GM12878 (cell line): ENCODE measurements at regions of chr2 and their contacts with region 1.

Region 1: DNA sequence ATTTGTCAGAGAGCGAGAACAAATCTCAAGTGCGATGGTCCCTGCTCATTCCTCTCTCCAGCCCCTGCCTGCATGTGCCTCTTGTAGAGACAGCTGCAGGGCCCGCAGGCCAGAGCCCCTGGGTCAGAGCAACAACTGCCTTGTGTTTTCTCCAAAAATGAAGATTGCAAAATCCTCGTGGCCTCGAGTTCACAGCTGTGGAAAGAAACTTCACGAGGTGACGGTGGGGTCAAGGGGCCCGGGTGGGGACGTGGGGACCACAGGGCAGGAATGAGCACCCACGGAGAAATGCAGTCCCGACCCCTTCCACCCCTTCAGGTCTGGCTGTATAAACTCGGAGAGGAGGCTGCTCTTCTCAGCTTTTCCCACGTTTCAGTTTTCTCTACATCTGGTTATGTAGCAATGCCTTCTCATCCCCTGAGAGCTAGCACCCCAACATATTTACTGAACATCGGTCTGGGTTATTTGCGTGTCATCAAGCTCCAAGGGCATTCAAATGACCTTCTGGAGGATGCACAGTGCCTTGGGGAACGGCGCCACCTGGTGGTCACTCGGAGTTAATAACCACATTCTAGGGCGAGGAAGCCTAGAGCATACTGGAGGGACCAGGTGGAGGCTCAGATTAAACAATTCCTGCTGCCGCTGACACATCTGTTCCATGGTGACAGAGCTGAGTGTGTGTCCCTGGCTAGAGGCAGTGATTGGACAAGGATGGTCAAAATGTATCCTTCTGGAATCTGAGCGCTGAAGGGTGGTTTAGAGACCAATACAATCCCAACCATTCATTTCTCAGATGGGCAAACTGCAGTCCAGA is 91.4 kb upstream of the CYRIA start:
- DNase-seq: peak; percentile 26
- ATAC-seq: peak; percentile 99
- H3K4me3 ChIP-seq: no peak overlapping the region
- H3K27ac ChIP-seq: no peak overlapping the region
- H3K4me1 ChIP-seq: no peaks in the 10 kb centered on the region
- H3K27me3 ChIP-seq: peaks cover 6% of the 10 kb centered on the region in 2 experiments; a peak in 3 of 4 replicates
- CTCF ChIP-seq: peak; percentile 76 to 95 (median 76)
- EP300 ChIP-seq: no peak
- POLR2A ChIP-seq: no peak
- RAD21 ChIP-seq: peak; percentile 99

Region 2: DNA sequence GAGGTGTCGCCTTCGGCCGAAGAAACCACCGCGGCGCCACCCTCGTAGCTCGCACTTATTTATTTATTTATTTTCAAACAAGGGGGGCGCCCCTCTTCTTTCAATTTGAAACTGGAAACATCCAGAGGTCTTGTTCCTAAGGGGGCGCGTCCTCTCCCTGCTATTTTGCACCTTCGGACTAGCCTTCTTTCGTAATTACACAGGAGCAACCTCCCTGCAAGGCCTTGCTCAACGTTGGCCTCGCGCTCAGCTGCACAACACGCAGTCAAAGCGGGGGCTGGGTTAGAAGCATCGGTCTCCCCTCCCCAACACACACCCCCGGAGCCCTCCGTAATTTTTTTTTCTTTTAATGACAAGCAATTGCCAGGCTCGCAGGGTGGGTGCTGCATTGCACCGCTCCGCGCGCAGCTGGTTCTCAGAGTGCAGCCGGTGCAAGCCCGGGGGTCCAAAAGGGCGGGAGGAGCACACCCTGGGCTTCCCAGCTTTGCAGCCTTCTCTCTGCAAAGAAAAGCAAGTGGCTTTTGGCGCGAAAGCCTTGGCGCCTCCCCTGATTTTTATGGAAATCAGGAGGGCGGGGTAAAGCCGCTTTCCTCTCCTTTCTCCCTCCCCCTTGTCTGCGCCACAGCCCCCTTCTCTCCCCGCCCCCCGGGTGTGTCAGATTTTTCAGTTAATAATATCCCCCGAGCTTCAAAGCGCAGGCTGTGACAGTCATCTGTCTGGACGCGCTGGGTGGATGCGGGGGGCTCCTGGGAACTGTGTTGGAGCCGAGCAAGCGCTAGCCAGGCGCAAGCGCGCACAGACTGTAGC is 817.0 kb before region 1 on chr2 and contains the start of gene MYCN:
- CTCF ChIA-PET with region 1: no interaction called
- POLR2A ChIA-PET with region 1: no interaction called
- RAD21 ChIA-PET with region 1: no interaction called
- SMC1A ChIA-PET with region 1: no interaction called
- in situ Hi-C with region 1: loop called (anchors 25 kb)
- intact Hi-C with region 1: no loop called
- DNase-seq: no peak
- ATAC-seq: no peak
- H3K4me3 ChIP-seq: no peak within 1 kb of the TSS
- H3K27ac ChIP-seq: no peak within 1 kb of the TSS
- H3K4me1 ChIP-seq: no peaks in the 10 kb centered on the region
- H3K27me3 ChIP-seq: peaks cover 12 to 14% of the 10 kb centered on the region in 2 experiments
- CTCF ChIP-seq: peak in 1 of 3 experiments; percentile 45; a peak in 3 of 6 replicates
- EP300 ChIP-seq: no peak
- POLR2A ChIP-seq: no peak
- RAD21 ChIP-seq: peak; percentile 74
- polyA plus RNA-seq, gene MYCN: not detected

Region 3: DNA sequence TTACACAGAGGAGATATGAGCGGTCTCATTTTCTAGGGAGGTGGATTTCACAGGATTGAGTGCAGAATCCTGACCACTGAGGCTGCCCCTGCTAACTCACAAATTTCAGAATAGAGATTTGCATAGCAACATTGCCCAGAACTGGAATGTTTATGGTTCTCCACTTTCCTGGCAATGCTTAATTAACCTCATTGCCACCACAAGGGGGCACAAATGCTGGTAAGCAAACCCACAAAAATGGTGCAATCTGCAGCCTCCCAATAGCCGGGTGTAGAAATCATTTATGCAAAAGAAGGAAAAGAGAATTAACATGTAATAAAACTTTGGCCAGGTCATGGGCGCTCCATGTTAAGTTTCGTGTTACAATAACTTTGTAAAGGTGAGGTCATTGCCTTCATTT is 203.8 kb before region 1 on chr2:
- CTCF ChIA-PET with region 1: interaction called, 7 read pairs
- POLR2A ChIA-PET with region 1: interaction called, 4 read pairs
- RAD21 ChIA-PET with region 1: interaction called, 6 read pairs
- SMC1A ChIA-PET with region 1: interaction called, 12 read pairs
- in situ Hi-C with region 1: no loop called
- intact Hi-C with region 1: loop called (anchors 1 kb)
- DNase-seq: no peak
- ATAC-seq: peak; percentile 73
- H3K4me3 ChIP-seq: no peak overlapping the region
- H3K27ac ChIP-seq: no peak overlapping the region
- H3K4me1 ChIP-seq: no peaks in the 10 kb centered on the region
- H3K27me3 ChIP-seq: no peaks in the 10 kb centered on the region
- CTCF ChIP-seq: peak; percentile 53 to 62 (median 57)
- EP300 ChIP-seq: no peak
- POLR2A ChIP-seq: no peak
- RAD21 ChIP-seq: peak; percentile 48; the same call in 1 of the 2 replicates

Region 4: DNA sequence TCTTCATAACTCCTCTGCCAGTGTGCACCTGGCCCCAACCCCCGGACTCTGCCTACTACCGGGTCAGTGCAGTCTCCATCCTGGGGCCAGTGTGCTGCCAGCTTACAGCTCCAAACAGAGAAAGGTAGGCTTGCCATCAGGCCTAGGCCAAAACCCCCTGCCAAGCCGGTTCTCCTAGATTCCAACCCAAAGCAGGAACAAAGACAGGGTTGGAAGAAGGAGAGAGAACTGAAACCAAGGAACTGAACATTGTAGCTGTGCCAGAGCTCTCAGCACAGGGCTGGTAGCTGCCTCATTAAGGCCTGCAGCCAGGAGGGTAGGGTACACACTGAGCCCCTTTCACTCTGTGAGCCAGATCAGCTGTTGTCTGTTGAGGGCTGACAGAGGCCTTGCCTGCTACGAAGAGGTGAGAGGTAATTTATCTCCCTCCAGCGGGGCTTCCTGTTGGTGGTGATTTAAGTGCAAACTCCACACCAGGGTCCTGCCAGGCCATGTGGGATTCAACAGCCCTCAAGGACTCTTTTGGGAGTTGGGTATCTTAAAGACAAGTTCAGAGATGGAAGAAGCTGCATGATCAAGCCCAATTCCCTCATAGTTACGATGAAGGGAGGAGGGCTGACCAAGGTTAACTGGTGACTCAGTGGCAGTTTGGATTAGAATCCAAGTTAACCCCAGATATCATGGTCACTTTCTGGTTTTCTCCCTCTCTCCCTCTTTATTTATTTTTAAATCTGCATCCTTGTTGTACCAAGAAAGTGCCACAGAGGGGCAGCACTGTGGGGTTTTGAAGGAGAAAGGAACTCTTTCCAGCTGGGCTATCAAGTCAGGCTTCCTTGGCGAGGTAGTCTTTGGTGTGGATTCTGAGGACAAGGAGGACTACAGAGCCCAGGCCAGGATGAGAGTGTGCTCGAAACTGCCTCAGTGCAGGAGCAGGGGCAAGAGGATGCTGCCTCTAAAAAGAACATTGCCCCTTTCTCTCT is 139.5 kb before region 1 on chr2:
- CTCF ChIA-PET with region 1: interaction called, 109 read pairs
- POLR2A ChIA-PET with region 1: no interaction called
- RAD21 ChIA-PET with region 1: interaction called, 59 read pairs
- SMC1A ChIA-PET with region 1: interaction called, 65 read pairs
- in situ Hi-C with region 1: loop called (anchors 5 kb)
- intact Hi-C with region 1: loop called (anchors 1 kb)
- DNase-seq: no peak
- ATAC-seq: no peak
- H3K4me3 ChIP-seq: no peak overlapping the region
- H3K27ac ChIP-seq: no peak overlapping the region
- H3K4me1 ChIP-seq: no peaks in the 10 kb centered on the region
- H3K27me3 ChIP-seq: peaks cover 0 to 3% of the 10 kb centered on the region in 2 experiments; a peak in 2 of 4 replicates
- CTCF ChIP-seq: peak in 2 of 3 experiments; percentile 22 to 24; a peak in 3 of 6 replicates
- EP300 ChIP-seq: no peak
- POLR2A ChIP-seq: no peak
- RAD21 ChIP-seq: peak; percentile 48

Region 5: DNA sequence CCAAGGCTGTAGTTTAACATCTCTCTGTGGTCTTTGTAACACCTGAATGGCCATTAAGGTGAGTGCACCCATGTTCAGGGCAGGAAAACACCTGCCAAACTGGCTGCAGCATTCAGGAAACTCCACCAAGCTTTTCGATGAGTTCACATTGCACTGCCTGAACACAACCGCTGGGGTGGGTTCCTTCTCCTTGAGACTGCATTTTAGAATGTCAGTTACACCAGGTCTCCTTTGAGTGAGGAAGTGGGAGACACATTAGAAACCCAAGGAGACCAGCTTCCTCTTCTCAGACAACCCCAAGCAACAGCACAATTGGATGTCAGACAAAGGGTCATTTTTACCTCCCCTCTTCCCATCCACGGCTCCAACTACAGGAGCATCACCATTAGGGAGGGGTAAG is 126.6 kb before region 1 on chr2:
- CTCF ChIA-PET with region 1: interaction called, 83 read pairs
- POLR2A ChIA-PET with region 1: no interaction called
- RAD21 ChIA-PET with region 1: interaction called, 30 read pairs
- SMC1A ChIA-PET with region 1: interaction called, 33 read pairs
- in situ Hi-C with region 1: no loop called
- intact Hi-C with region 1: no loop called
- DNase-seq: no peak
- ATAC-seq: peak; percentile 69
- H3K4me3 ChIP-seq: no peak overlapping the region
- H3K27ac ChIP-seq: no peak overlapping the region
- H3K4me1 ChIP-seq: peaks cover 10% of the 10 kb centered on the region
- H3K27me3 ChIP-seq: peaks cover 0 to 16% of the 10 kb centered on the region in 2 experiments
- CTCF ChIP-seq: peak; percentile 18 to 31 (median 27); a peak in 3 of 6 replicates
- EP300 ChIP-seq: no peak
- POLR2A ChIP-seq: no peak
- RAD21 ChIP-seq: peak; percentile 60

Region 6: DNA sequence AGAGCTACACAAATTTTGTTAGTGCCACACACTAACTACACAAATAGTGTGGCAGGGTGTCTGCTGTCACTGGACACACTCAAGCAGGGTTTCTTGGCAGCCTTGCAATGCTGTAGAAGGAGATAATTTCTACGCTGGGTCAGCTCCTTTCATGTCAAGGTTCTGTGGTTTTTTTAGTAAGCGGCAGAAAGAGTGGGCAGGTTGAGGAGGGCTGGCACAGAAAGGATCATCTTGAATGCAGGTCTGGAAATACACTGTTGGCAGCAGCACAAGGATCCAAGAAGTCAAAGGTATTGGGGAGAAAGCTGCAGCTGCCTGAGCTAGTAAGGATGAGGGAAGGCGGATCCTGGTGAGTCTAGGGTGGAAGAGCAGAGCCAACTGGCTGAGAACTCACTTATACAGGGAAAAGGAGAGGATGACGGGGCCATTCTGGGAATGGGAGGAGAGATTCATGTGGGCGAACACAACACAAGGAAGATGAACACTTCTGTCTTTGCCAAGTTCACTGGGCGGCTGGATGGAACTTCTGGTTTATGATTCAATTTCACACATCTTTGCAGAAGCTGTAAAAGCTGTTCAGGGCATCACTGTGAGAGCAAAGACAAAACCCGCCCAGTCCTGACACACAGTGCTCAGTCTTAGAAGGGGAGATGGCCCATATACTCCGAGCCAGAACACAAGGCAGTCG is 74.5 kb before region 1 on chr2:
- CTCF ChIA-PET with region 1: interaction called, 5 read pairs
- POLR2A ChIA-PET with region 1: no interaction called
- RAD21 ChIA-PET with region 1: interaction called, 4 read pairs
- SMC1A ChIA-PET with region 1: interaction called, 11 read pairs
- in situ Hi-C with region 1: no loop called
- intact Hi-C with region 1: no loop called
- DNase-seq: no peak
- ATAC-seq: no peak
- H3K4me3 ChIP-seq: no peak overlapping the region
- H3K27ac ChIP-seq: no peak overlapping the region
- H3K4me1 ChIP-seq: no peaks in the 10 kb centered on the region
- H3K27me3 ChIP-seq: no peaks in the 10 kb centered on the region; a peak in 1 of 4 replicates
- CTCF ChIP-seq: no peak
- EP300 ChIP-seq: no peak
- POLR2A ChIP-seq: no peak
- RAD21 ChIP-seq: no peak